K562 (cell line): ENCODE measurements at regions of chr20 and their contacts with region 1.

Region 1: DNA sequence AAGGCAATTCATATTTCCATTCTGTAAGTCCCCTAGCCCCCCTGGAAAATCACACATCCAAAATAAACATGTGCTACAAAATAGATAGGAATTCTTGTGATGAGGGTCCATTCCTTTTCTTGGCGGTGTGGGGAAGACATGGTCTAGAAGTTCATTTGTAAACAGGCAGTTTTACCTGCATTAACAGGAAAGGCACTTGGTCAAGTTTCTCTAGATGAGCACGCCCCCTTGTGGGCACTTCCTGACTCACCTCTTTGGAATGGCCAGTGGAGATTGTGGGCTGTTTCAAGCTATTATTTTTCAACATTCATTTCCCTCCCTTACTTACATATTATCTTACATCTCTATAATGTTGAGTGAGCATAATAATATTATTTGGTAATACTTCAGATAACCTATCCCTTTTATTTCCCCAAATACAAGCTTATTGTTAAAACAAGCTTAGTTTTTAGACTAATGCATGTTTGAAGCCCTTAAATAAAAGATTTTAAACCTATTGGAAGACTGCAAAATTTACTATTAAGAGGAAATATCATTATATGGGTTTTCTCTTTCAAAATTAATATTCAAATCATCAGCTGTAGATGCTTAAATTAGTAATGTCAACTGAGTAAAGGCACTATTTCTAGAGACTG is 92.1 kb downstream of the TASP1 start:
- DNase-seq: peak; percentile 37 to 73 (median 41)
- ATAC-seq: peak; percentile 83
- H3K4me3 ChIP-seq: no peak overlapping the region
- H3K27ac ChIP-seq: no peak overlapping the region
- H3K4me1 ChIP-seq: no peaks in the 10 kb centered on the region
- H3K27me3 ChIP-seq: no peaks in the 10 kb centered on the region
- CTCF ChIP-seq: peak; percentile 58 to 69 (median 64)
- EP300 ChIP-seq: no peak
- POLR2A ChIP-seq: no peak
- RAD21 ChIP-seq: peak; percentile 57 to 68

Region 2: DNA sequence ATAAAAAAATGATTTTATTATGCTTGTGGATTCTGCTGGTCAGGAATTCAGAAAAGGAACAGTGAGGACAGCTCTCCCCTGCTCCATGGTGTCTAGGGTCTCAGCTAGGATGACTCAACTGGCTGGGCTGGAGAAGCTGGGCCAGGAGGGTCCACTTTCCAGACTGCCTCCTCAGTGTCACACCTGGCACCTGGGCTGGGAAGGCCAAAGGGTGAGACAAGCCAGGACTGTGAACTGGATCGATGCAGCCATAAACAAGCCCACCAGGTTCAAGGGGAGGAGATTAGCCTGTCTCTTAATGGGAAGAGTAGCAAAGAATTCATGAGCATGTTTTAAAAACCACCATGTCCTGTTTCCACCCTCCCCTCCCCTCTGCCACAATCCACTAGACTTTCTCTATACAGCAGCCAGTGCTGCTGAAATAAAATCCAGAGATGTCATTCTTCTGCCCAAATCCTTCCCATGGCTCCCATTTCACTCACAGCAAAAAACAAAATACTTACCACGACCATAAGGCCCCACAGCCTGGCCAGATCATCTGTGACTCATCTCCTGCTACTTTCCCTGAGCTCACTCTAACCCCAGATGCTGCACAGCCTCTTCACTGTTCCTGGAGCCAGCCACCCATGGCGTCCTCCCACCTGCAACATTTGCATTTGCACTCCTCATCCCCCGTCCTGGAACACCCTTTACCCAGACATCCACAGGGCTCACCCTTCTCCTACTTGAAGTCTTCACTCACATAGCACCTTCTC is 524.0 kb before region 1 on chr20:
- CTCF ChIA-PET with region 1: no interaction called
- POLR2A ChIA-PET with region 1: no interaction called
- in situ Hi-C with region 1: no loop called
- intact Hi-C with region 1: no loop called
- DNase-seq: no peak
- ATAC-seq: no peak
- H3K4me3 ChIP-seq: no peak overlapping the region
- H3K27ac ChIP-seq: no peak overlapping the region
- H3K4me1 ChIP-seq: no peaks in the 10 kb centered on the region
- H3K27me3 ChIP-seq: no peaks in the 10 kb centered on the region
- CTCF ChIP-seq: no peak
- EP300 ChIP-seq: no peak
- POLR2A ChIP-seq: no peak
- RAD21 ChIP-seq: no peak

Region 3: DNA sequence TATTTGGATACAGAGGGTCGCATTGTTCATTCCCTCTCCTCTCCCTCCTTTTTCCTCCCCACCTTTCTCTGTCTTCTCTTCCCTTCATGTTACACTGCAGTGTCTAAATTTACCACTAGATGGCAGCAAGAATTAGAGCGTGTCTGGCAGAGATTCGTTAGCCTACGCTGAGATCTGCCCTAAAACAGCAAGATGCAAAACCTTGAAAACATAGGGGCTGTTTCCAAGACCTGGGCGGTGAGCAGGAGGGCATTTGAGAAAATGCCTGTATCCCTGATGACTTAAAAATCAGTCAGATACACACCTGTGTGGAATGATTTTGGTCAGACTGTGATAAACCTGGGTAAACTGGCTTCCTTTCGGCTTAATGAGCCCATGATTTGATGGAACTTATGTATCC is 427.0 kb before region 1 on chr20:
- CTCF ChIA-PET with region 1: no interaction called
- POLR2A ChIA-PET with region 1: no interaction called
- in situ Hi-C with region 1: no loop called
- intact Hi-C with region 1: loop called (anchors 1 kb)
- DNase-seq: peak; percentile 13 to 44 (median 38)
- ATAC-seq: peak; percentile 86
- H3K4me3 ChIP-seq: no peak overlapping the region
- H3K27ac ChIP-seq: no peak overlapping the region
- H3K4me1 ChIP-seq: no peaks in the 10 kb centered on the region
- H3K27me3 ChIP-seq: no peaks in the 10 kb centered on the region
- CTCF ChIP-seq: peak; percentile 45 to 63 (median 54); a peak in 5 of 6 replicates
- EP300 ChIP-seq: no peak
- POLR2A ChIP-seq: no peak
- RAD21 ChIP-seq: peak; percentile 47 to 67

Region 4: DNA sequence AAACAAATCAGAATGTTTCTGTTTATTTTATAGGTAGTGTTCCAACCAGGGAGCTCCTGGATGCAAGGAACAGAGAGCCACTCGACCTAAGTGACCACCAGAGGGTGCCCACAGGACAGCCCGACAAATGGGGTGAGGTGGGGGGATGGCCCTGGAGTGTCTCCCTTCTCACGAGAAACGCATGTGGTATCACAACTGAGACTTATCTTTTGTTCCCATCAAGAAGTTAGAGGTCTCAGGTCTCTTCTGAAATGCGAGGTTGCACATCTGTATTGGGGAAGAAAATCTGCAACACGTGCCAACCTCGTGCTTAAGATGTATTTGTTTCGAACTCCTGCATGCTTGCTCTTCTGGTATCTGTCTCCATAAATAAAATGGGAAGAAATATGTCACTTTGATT is 221.6 kb before region 1 on chr20:
- CTCF ChIA-PET with region 1: interaction called, 11 read pairs
- POLR2A ChIA-PET with region 1: interaction called, 3 read pairs
- in situ Hi-C with region 1: loop called (anchors 10 kb)
- intact Hi-C with region 1: loop called (anchors 1 kb)
- DNase-seq: peak; percentile 11 to 48 (median 24)
- ATAC-seq: peak; percentile 91
- H3K4me3 ChIP-seq: no peak overlapping the region
- H3K27ac ChIP-seq: no peak overlapping the region
- H3K4me1 ChIP-seq: no peaks in the 10 kb centered on the region; a peak in 1 of 5 replicates
- H3K27me3 ChIP-seq: no peaks in the 10 kb centered on the region
- CTCF ChIP-seq: peak; percentile 51 to 60 (median 54)
- EP300 ChIP-seq: no peak
- POLR2A ChIP-seq: no peak
- RAD21 ChIP-seq: peak; percentile 43 to 67; a peak in 3 of 4 replicates

Region 5: DNA sequence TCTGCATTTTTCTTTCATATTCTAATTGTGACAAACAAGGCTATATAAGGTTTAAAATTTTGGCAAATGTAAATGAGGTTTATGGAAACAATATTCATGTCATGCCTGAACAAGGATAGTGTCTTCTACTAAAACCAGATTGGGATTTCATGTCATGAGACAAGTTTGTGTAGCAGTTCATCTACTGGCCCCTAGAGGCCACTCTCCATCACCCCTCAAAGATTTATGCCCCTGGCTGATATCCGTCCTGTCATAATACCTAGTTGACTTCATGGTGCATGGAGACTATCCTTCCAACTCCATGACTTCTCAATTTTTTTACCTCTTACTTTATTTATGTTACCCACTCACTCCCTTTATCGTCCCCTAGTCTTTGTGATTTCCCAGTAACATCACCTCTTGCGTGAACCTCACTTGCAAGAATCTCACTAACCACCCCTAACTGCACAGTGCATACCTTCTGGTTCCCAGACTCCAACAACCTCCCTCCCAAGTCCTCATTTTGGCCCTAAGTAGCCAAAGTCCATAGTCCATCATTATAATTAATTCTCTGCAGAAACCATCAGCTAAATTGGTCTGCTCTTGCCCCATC is 87.7 kb before region 1 on chr20:
- CTCF ChIA-PET with region 1: no interaction called
- POLR2A ChIA-PET with region 1: no interaction called
- in situ Hi-C with region 1: no loop called
- intact Hi-C with region 1: loop called (anchors 10 kb)
- DNase-seq: peak; percentile 39 to 51 (median 45)
- ATAC-seq: peak; percentile 85
- H3K4me3 ChIP-seq: no peak overlapping the region
- H3K27ac ChIP-seq: no peak overlapping the region
- H3K4me1 ChIP-seq: no peaks in the 10 kb centered on the region
- H3K27me3 ChIP-seq: no peaks in the 10 kb centered on the region
- CTCF ChIP-seq: peak; percentile 58 to 73 (median 66)
- EP300 ChIP-seq: no peak
- POLR2A ChIP-seq: no peak
- RAD21 ChIP-seq: peak in 1 of 2 experiments; percentile 44; a peak in 3 of 4 replicates